ENCODE measurements at regions of chr20 and their contacts with region 1.

Region 1: DNA sequence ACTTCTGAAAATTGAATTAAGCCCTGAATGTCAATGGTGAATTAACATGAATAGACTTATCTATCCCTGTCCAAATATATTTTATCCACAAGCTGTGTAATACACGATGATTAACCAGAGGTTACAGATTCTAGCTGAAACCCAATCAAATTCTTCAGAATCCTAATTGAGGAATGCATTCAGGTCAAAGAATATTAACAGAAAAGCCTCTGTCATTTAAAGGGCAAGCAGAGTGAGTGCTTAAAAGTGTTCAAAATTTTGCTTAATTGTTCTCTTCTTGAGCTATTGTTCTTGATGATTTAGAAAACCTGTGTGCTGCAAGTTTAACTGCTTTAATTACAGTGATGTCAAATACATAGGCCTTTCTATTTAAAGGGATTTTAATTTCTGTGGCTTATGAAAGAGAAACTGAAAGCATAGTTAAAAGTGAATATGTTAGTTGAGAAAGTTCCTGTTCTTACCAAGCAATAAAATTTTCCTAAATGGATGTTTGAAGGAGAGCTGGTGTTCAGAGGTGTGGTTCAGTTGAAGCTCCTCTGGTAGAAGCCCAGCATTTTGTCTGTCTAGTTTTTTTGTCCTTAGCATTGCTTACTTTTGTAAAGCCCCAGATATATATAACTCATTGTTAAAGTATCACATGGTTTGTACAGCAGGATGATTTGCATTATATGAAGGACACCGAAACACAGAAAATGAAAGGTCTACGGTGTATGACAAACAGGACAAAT is 466.3 kb upstream of the PLCB4 start:
- DNase-seq: peak; percentile 56
- H3K4me3 ChIP-seq: peak overlapping the region; percentile 58
- H3K27ac ChIP-seq: peak overlapping the region; percentile 77
- H3K4me1 ChIP-seq: peaks cover 34% of the 10 kb centered on the region
- CTCF ChIP-seq: no peak

Region 2: GRCh38 chr20:8431538-8432434 is 170.8 kb before region 1 on chr20:
- CTCF ChIA-PET with region 1: no interaction called
- POLR2A ChIA-PET with region 1: no interaction called
- intact Hi-C with region 1: no loop called
- DNase-seq: no peak
- H3K4me3 ChIP-seq: no peak overlapping the region
- H3K27ac ChIP-seq: no peak overlapping the region
- H3K4me1 ChIP-seq: peaks cover 58% of the 10 kb centered on the region
- CTCF ChIP-seq: no peak

Region 3: DNA sequence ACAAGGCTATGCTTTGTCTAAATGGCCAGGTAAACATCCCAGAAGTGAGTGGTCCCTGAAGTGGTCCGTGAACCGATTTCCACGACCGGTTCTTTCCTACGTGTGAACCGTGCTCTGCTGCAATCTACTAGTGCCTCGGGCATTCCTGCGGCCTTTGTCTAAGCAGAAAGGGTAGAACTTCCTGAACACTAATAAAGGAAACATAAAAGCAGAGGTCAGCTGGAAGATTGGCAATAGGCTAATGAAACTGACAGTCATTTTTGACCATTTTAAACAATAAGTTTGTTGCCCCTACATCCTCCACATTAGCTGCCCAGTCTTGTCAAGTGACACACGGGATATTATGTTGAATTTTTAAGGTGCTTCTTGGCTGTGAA is 60.5 kb before region 1 on chr20:
- CTCF ChIA-PET with region 1: no interaction called
- POLR2A ChIA-PET with region 1: interaction called, 4 read pairs
- intact Hi-C with region 1: loop called (anchors 5 kb)
- DNase-seq: no peak
- H3K4me3 ChIP-seq: no peak overlapping the region
- H3K27ac ChIP-seq: peak overlapping the region; percentile 93
- H3K4me1 ChIP-seq: peaks cover 56% of the 10 kb centered on the region
- CTCF ChIP-seq: no peak

Region 4: GRCh38 chr20:9038791-9039535 is 436.4 kb after region 1 on chr20:
- CTCF ChIA-PET with region 1: no interaction called
- POLR2A ChIA-PET with region 1: no interaction called
- intact Hi-C with region 1: no loop called
- DNase-seq: no peak
- H3K4me3 ChIP-seq: no peak overlapping the region
- H3K27ac ChIP-seq: no peak overlapping the region
- H3K4me1 ChIP-seq: no peaks in the 10 kb centered on the region
- CTCF ChIP-seq: no peak